Prostate gland (tissue), 2 donors: ENCODE measurements at regions of chr2 and their contacts with region 1.

Region 1: DNA sequence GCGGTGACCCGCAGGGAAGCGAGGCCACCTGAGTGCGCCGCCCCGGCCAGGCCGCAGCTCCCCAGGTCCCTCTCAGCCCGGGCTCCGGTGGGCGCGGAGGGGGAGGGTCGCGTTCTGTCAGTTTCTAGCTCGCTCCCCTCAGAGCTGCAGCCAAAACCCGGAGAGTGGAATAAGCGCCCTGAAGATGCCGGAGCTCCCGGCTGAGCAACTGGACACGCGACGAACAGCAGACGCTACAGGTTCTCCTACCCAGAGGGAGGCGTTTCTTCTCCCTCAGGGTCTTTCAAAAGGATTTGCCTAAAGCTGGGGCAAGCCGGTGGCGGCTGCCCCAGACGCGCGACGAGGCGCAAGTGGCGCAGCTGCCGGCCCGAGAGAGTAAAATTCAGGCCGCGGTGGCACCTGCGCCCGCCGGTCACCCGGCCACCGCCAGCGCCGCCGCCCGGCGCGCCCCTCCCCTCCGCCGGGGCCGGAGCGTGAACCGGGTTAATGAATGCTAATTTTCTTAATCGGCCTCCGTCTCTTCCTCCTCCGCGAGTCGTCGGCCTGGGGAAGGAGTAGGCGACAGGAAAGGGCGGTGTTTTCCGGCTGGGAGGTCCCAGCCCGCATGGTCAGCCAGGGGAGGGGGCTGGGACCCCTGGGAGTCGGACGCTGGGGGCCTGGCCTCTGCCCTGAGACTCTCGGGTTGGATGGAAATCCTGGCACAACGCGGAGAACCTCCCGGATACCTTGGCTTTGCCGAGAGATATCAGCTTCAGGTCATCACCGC is 845 bp upstream of the CDC42EP3 start:
- DNase-seq: peak; percentile 70
- H3K4me3 ChIP-seq: peak overlapping the region; percentile 88 to 91
- H3K27ac ChIP-seq: peak overlapping the region; percentile 93 to 94
- H3K4me1 ChIP-seq: peaks cover 3% of the 10 kb centered on the region
- H3K27me3 ChIP-seq: no peaks in the 10 kb centered on the region
- CTCF ChIP-seq: no peak
- POLR2A ChIP-seq: peak; percentile 12

Region 2: DNA sequence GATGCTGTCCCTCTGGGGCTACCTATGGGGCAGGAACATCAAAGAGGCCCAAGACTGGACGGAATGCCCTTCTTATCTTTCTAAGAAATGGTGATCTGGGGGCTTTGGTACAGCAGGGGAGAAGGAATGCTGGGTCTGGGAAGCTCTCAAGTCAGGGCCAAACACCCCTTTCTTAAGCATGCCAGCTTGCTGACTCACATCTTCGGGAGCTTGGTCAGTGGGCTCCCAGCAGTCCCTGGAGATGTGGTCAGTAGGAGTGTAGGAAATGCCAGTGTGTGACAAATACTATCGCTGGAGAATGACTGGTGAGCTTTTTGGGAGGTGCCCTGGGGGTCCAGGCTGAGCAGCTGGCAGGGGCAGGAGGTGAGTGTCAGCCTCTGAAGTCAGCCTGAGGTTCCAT is 104.2 kb after region 1 on chr2:
- intact Hi-C with region 1: loop called (anchors 5 kb)
- DNase-seq: no peak
- H3K4me3 ChIP-seq: no peak overlapping the region
- H3K27ac ChIP-seq: peak overlapping the region; percentile 69 to 77
- H3K4me1 ChIP-seq: no peaks in the 10 kb centered on the region
- H3K27me3 ChIP-seq: no peaks in the 10 kb centered on the region
- CTCF ChIP-seq: no peak
- POLR2A ChIP-seq: no peak

Region 3: GRCh38 chr2:37809525-37809924 is 137.2 kb after region 1 on chr2:
- intact Hi-C with region 1: no loop called
- DNase-seq: no peak
- H3K4me3 ChIP-seq: no peak overlapping the region
- H3K27ac ChIP-seq: no peak overlapping the region
- H3K4me1 ChIP-seq: no peaks in the 10 kb centered on the region
- H3K27me3 ChIP-seq: no peaks in the 10 kb centered on the region
- CTCF ChIP-seq: peak in 3 of 4 experiments; percentile 25 to 56 (median 46)
- POLR2A ChIP-seq: no peak

Region 4: GRCh38 chr2:37832590-37833197 is 160.4 kb after region 1 on chr2:
- intact Hi-C with region 1: loop called (anchors 2 kb)
- DNase-seq: peak; percentile 90
- H3K4me3 ChIP-seq: no peak overlapping the region
- H3K27ac ChIP-seq: peak overlapping the region in 1 of 2 donors; percentile 21
- H3K4me1 ChIP-seq: no peaks in the 10 kb centered on the region
- H3K27me3 ChIP-seq: no peaks in the 10 kb centered on the region
- CTCF ChIP-seq: peak; percentile 54 to 94 (median 86)
- POLR2A ChIP-seq: no peak

Region 5: DNA sequence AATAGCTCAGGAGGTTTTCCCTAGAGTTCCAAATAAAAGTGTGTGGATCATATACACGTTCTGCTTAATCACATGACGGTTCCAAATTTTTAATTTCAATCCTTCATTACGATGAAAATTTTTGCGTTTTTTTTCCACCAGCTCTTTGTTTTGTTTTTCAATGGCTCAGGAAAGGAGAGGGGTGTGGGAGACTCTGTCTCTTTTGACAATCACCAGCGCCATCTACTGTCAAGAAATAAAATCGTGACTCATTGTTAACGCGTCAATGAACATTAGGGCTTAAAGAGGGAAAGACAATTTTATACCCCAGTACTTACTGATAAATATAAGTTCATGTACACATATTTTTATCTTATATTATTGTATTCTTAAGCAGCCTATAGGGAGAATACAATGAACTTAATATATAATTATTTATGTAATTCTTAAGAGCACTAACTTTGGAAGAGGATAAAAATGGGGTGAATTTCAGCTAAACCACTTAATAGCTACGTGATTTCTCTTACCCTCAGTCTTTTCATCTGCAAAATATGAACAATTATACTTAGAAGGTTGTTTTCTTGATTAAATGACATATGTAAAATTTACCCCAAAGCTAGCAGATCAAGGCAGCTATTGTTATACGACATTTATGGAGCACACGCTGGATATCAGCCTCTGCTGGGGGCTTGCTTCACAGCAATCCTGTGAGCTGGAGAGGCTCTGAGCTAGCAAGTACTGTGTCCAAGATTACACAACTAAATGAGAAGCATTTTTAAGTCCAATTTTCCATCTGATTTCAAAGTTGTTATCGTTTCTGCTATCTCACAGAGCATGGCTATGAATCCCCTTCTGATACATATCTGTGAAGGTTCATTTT is 205.4 kb after region 1 on chr2:
- intact Hi-C with region 1: loop called (anchors 5 kb)
- DNase-seq: peak; percentile 43
- H3K4me3 ChIP-seq: no peak overlapping the region
- H3K27ac ChIP-seq: no peak overlapping the region
- H3K4me1 ChIP-seq: no peaks in the 10 kb centered on the region
- H3K27me3 ChIP-seq: no peaks in the 10 kb centered on the region
- CTCF ChIP-seq: peak; percentile 47 to 83 (median 80)
- POLR2A ChIP-seq: no peak